ENCODE measurements at regions of chr15 and their contacts with region 1.

Region 1: DNA sequence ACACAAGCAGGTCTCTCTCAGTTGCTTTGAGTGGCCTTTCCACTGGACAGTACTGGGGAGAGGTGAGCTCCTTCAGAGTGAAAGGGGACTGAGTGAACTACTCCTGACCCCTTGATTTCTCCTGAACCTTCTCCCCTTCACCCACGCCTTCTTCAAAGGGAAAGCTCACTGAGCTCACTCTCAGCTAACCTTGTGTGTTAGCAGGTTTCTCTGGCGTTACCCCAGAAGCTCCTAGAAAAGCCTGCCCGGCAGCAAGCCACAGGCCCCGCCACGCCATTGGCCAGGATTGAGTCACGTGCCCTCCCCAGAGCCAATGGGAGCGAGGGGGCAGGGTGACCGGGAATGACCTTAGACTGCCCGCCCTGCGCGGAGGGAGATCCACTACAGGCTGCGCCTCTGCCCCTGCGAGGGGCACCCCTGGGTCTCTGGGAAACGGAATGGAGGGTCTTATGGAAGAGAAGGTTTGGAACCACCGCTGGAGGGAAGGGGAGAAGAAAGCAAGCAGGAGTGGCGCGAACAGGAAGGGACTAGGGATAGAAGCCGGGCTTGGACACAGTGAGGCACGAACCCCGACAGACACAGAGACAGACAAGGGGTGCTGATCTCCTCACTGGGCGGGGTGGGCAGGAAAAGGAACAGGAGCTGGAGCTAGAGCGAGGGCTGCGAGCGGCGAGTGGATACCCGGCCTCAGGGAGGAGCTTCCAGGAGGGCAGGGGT is 17.4 kb upstream of the CLK3 start:
- DNase-seq: peak; percentile 84
- ATAC-seq: peak; percentile 95
- H3K4me3 ChIP-seq: peak overlapping the region; percentile 57 to 81 (median 63)
- H3K27ac ChIP-seq: peak overlapping the region; percentile 83
- H3K4me1 ChIP-seq: peaks cover 35% of the 10 kb centered on the region
- H3K27me3 ChIP-seq: 0 out of 5 replicates have a peak, but pooled peaks cover 0 to 1% of the 10 kb centered on the region in 2 experiments
- CTCF ChIP-seq: peak; percentile 15; the same call in 1 of the 2 replicates
- EP300 ChIP-seq: peak in 1 of 2 experiments; percentile 45; a peak in 1 of 4 replicates
- POLR2A ChIP-seq: peak; percentile 65 to 96
- RAD21 ChIP-seq: 0 out of 2 replicates have a peak, but pooled peaks have one; percentile 7

Region 2: DNA sequence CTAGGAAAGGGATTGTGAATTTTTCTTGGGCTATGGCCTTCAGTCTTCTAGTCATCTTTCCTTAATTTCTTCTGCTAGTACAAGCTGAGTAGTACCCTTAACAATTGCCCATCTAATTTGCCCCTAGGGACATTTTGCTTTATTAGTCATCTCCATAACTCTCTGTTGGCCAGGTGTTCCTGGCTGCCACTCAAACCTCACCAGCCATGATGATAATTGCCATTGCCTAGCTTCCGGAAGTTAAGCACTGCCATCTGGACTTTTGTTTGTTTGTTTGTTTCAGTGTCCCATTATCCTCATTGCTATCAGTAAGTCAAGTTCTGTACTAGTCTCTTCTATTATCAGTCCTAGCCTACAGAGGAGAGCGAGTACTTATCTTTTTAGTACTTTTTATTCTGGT is 100.7 kb before region 1 on chr15:
- CTCF ChIA-PET with region 1: no interaction called
- POLR2A ChIA-PET with region 1: no interaction called
- in situ Hi-C with region 1: no loop called
- intact Hi-C with region 1: no loop called
- DNase-seq: no peak
- ATAC-seq: no peak
- H3K4me3 ChIP-seq: no peak overlapping the region
- H3K27ac ChIP-seq: no peak overlapping the region
- H3K4me1 ChIP-seq: no peaks in the 10 kb centered on the region
- H3K27me3 ChIP-seq: no peaks in the 10 kb centered on the region
- CTCF ChIP-seq: no peak
- EP300 ChIP-seq: no peak
- POLR2A ChIP-seq: no peak
- RAD21 ChIP-seq: no peak

Region 3: GRCh38 chr15:74545880-74546656 is 52.2 kb before region 1 on chr15:
- CTCF ChIA-PET with region 1: no interaction called
- POLR2A ChIA-PET with region 1: interaction called, 10 read pairs
- in situ Hi-C with region 1: no loop called
- intact Hi-C with region 1: loop called (anchors 5 kb)
- DNase-seq: peak; percentile 93
- ATAC-seq: peak; percentile 92
- H3K4me3 ChIP-seq: no peak overlapping the region
- H3K27ac ChIP-seq: no peak overlapping the region
- H3K4me1 ChIP-seq: peaks cover 37% of the 10 kb centered on the region
- H3K27me3 ChIP-seq: no peaks in the 10 kb centered on the region
- CTCF ChIP-seq: peak; percentile 27; the same call in 1 of the 2 replicates
- EP300 ChIP-seq: peak in 1 of 2 experiments; percentile 51; a peak in 1 of 4 replicates
- POLR2A ChIP-seq: no peak
- RAD21 ChIP-seq: 0 out of 2 replicates have a peak, but pooled peaks have one; percentile 10

Measured in HepG2 (cell line).